ENCODE measurements at regions of chr16 and their contacts with region 1.

Region 1: GRCh38 chr16:86563489-86564345 is 2.9 kb upstream of the FOXC2 start:
- DNase-seq: peak; percentile 89 to 93
- H3K4me3 ChIP-seq: peak overlapping the region in 1 of 3 donors; percentile 44
- H3K27ac ChIP-seq: no peak overlapping the region
- H3K4me1 ChIP-seq: no peaks in the 10 kb centered on the region
- H3K27me3 ChIP-seq: peaks cover 3 to 75% of the 10 kb centered on the region in 2 donors
- CTCF ChIP-seq: peak; percentile 98 to 100 (median 100)
- POLR2A ChIP-seq: no peak

Region 2: GRCh38 chr16:87076950-87077749 is 513.4 kb after region 1 on chr16:
- intact Hi-C with region 1: loop called (anchors 10 kb)
- DNase-seq: no peak
- H3K4me3 ChIP-seq: no peak overlapping the region
- H3K27ac ChIP-seq: no peak overlapping the region
- H3K4me1 ChIP-seq: no peaks in the 10 kb centered on the region
- H3K27me3 ChIP-seq: no peaks in the 10 kb centered on the region
- CTCF ChIP-seq: peak in 1 of 3 donors; percentile 16
- POLR2A ChIP-seq: no peak